Heart right ventricle (tissue), 16 donors: ENCODE measurements at regions of chr10 and their contacts with region 1.

Region 1: DNA sequence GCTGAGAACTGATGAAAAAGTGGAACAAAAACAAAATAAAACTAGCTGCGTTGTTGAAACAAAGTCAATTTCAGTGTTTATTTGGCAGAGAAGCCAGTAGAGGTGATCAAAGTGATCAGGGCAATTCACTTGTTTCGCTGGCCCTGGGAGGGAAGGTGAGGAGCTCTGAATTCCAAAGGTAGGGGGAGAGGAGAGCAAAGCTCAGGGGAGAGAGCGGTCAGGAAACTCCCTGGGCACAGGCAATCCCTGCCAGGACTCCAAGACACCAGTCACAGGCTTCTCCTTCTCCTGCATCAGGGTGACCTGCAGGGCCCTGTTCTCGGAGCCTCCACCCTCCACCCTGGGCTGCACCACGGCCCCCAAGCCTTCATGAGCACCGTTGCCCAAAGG is 6.8 kb upstream of the KIAA1217 start:
- DNase-seq: no peak
- ATAC-seq: peak in 2 of 8 donors; percentile 12 to 31
- H3K4me3 ChIP-seq: no peak overlapping the region
- H3K27ac ChIP-seq: peak overlapping the region in 5 of 10 donors; percentile 2 to 61 (median 10)
- H3K4me1 ChIP-seq: peaks cover 5 to 57% (median 16%) of the 10 kb centered on the region in 9 donors
- H3K27me3 ChIP-seq: no peaks in the 10 kb centered on the region
- CTCF ChIP-seq: no peak

Region 2: GRCh38 chr10:24086296-24087086 is 115.7 kb before region 1 on chr10:
- intact Hi-C with region 1: loop called in 1 of 10 experiments (anchors 10 kb)
- DNase-seq: no peak
- ATAC-seq: peak in 1 of 8 donors; percentile 59
- H3K4me3 ChIP-seq: no peak overlapping the region
- H3K27ac ChIP-seq: peak overlapping the region in 2 of 10 donors; percentile 0 to 18
- H3K4me1 ChIP-seq: peaks cover 0 to 30% (median 16%) of the 10 kb centered on the region in 9 donors
- H3K27me3 ChIP-seq: no peaks in the 10 kb centered on the region
- CTCF ChIP-seq: no peak

Region 3: GRCh38 chr10:24333736-24334135 is 131.6 kb after region 1 on chr10:
- intact Hi-C with region 1: no loop called
- DNase-seq: no peak
- ATAC-seq: no peak
- H3K4me3 ChIP-seq: no peak overlapping the region
- H3K27ac ChIP-seq: no peak overlapping the region
- H3K4me1 ChIP-seq: peaks cover 6 to 40% (median 18%) of the 10 kb centered on the region in 9 donors
- H3K27me3 ChIP-seq: no peaks in the 10 kb centered on the region
- CTCF ChIP-seq: no peak

Region 4: GRCh38 chr10:24518981-24519597 is 316.9 kb after region 1 on chr10:
- intact Hi-C with region 1: loop called in 4 of 10 experiments (anchors 5 to 10 kb)
- DNase-seq: peak; percentile 18 to 75
- ATAC-seq: peak; percentile 21 to 77 (median 68)
- H3K4me3 ChIP-seq: no peak overlapping the region
- H3K27ac ChIP-seq: peak overlapping the region in 2 of 10 donors; percentile 2 to 10
- H3K4me1 ChIP-seq: peaks cover 0 to 11% (median 6%) of the 10 kb centered on the region in 9 donors
- H3K27me3 ChIP-seq: no peaks in the 10 kb centered on the region
- CTCF ChIP-seq: peak; percentile 69 to 85 (median 75)